Caco-2 (cell line): ENCODE measurements at regions of chr11 and their contacts with region 1.

Region 1: DNA sequence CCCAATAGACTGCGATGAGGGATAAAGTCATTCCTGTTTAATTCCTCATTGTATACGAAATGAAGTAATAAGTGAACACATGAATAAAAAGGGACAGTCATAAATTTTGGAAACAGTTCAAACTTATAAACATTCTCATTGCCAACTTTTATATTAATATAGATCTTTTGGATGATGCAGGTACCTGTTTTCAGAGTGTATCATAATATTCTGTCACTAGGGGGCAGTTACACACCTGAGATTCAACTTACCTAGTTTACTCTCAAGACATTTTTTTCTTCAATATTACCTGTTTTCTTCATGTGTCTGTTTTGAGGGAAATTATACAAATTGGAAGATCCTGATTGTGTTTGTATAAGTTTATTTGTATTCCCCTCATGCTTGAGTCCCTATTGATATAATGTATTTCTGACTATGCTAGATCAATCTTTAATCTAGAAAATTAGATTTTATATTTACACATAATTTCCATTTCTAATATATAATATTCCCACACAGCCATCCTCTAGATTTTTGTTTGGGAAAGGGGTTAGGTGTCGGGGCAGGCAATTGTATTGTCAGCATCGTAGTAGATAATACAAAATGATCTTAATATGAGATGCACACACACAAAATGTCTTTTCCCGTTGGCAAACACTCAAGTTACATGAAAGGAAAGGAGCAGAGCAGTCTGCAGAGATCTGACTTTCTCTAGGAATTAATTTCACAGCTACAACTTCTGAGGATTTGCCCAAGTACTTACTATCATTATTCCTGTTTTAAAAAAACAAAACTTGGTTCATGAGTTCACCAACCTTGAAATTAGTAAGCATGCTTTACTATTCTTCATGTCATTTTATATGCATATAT is 18.4 kb downstream of the FDX1 start:
- DNase-seq: no peak
- H3K4me3 ChIP-seq: no peak overlapping the region
- H3K4me3 Mint-ChIP-seq: no peak overlapping the region
- H3K27ac Mint-ChIP-seq: no peak overlapping the region
- H3K4me1 ChIP-seq: peaks cover 8% of the 10 kb centered on the region; the same call in 1 of the 2 replicates
- H3K4me1 Mint-ChIP-seq: peaks cover 16% of the 10 kb centered on the region
- H3K27me3 ChIP-seq: no peaks in the 10 kb centered on the region
- H3K27me3 Mint-ChIP-seq: no peaks in the 10 kb centered on the region
- CTCF ChIP-seq: peak; percentile 71 to 72

Region 2: GRCh38 chr11:110434952-110435779 is 13.0 kb before region 1 on chr11:
- CTCF ChIA-PET with region 1: interaction called, 15 read pairs
- POLR2A ChIA-PET with region 1: no interaction called
- intact Hi-C with region 1: no loop called
- DNase-seq: peak; percentile 58 to 64
- H3K4me3 ChIP-seq: no peak overlapping the region
- H3K4me3 Mint-ChIP-seq: no peak overlapping the region
- H3K27ac Mint-ChIP-seq: no peak overlapping the region
- H3K4me1 ChIP-seq: peaks cover 30% of the 10 kb centered on the region
- H3K4me1 Mint-ChIP-seq: peaks cover 33% of the 10 kb centered on the region
- H3K27me3 ChIP-seq: no peaks in the 10 kb centered on the region
- H3K27me3 Mint-ChIP-seq: no peaks in the 10 kb centered on the region
- CTCF ChIP-seq: peak; percentile 62 to 63

Region 3: DNA sequence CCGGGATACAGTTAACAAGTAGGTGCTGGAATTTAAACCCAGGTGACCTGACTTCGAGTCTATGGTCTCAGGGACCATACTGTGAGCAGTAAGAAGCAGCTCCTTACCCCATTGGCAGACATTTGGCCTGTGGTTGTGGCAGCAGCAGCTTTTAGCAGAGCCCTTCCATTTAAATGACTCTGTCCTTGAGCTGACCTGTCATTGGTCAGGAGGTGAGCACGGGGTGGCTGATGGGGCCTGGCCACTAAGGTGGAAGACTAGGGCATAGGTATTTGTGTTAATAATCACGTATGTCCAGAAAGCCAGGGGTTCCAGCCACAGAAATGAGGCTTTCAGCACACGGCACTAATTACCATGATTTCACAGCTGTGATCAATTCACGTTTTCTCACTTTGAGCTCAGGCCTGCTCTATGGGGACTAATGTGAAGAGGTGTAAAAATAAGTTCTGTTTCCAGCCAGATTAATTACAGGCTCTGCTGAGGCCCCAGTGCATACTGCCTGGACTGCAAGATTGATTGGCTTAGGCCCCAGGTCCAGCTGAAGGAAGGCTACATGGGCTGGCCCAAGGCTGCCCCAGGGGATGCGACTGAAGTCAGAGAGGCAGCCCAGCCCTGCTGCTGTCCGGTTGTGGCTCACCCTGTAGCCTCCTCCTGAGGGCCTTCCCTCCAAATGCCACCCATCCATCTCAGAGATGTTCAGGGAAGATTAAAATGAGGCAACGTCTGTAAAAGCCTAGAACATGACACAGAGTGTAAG is 57.6 kb after region 1 on chr11:
- CTCF ChIA-PET with region 1: no interaction called
- POLR2A ChIA-PET with region 1: no interaction called
- intact Hi-C with region 1: no loop called
- DNase-seq: no peak
- H3K4me3 ChIP-seq: no peak overlapping the region
- H3K4me3 Mint-ChIP-seq: no peak overlapping the region
- H3K27ac Mint-ChIP-seq: no peak overlapping the region
- H3K4me1 ChIP-seq: no peaks in the 10 kb centered on the region
- H3K4me1 Mint-ChIP-seq: no peaks in the 10 kb centered on the region
- H3K27me3 ChIP-seq: peaks cover 3% of the 10 kb centered on the region; the same call in 1 of the 2 replicates
- H3K27me3 Mint-ChIP-seq: peaks cover 10% of the 10 kb centered on the region
- CTCF ChIP-seq: no peak

Region 4: GRCh38 chr11:110582728-110583432 is 134.8 kb after region 1 on chr11:
- CTCF ChIA-PET with region 1: no interaction called
- POLR2A ChIA-PET with region 1: no interaction called
- intact Hi-C with region 1: loop called (anchors 5 kb)
- DNase-seq: peak in 1 of 2 experiments; percentile 45
- H3K4me3 ChIP-seq: no peak overlapping the region
- H3K4me3 Mint-ChIP-seq: no peak overlapping the region
- H3K27ac Mint-ChIP-seq: peak overlapping the region; percentile 30
- H3K4me1 ChIP-seq: peaks cover 21% of the 10 kb centered on the region
- H3K4me1 Mint-ChIP-seq: peaks cover 24% of the 10 kb centered on the region
- H3K27me3 ChIP-seq: no peaks in the 10 kb centered on the region
- H3K27me3 Mint-ChIP-seq: no peaks in the 10 kb centered on the region
- CTCF ChIP-seq: no peak

Region 5: DNA sequence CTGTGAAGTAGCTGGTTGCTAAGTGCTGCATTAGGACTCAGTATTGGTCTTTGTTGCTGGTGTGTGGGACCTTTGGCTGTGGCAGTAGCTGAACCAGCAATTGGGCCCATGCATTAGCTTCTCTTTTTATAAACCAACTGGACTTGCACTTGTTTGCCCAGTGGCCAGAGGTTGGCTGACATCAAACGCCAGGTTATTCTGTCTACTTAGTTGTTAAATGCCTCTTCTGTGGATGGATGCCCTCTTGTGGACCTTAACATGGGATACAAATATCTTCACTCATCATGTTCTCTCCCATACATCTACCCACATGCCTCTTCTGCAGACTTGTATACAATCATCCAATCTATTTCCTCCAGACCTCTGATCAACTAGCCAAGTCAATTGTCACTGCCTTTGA is 290.5 kb after region 1 on chr11:
- CTCF ChIA-PET with region 1: no interaction called
- POLR2A ChIA-PET with region 1: no interaction called
- intact Hi-C with region 1: loop called (anchors 1 kb)
- DNase-seq: peak in 1 of 2 experiments; percentile 14
- H3K4me3 ChIP-seq: no peak overlapping the region
- H3K4me3 Mint-ChIP-seq: no peak overlapping the region
- H3K27ac Mint-ChIP-seq: no peak overlapping the region
- H3K4me1 ChIP-seq: no peaks in the 10 kb centered on the region
- H3K4me1 Mint-ChIP-seq: no peaks in the 10 kb centered on the region
- H3K27me3 ChIP-seq: no peaks in the 10 kb centered on the region
- H3K27me3 Mint-ChIP-seq: peaks cover 14% of the 10 kb centered on the region
- CTCF ChIP-seq: peak in 1 of 2 experiments; percentile 14

Region 6: GRCh38 chr11:111046291-111046690 is 598.2 kb after region 1 on chr11:
- CTCF ChIA-PET with region 1: no interaction called
- POLR2A ChIA-PET with region 1: no interaction called
- intact Hi-C with region 1: no loop called
- DNase-seq: no peak
- H3K4me3 ChIP-seq: no peak overlapping the region
- H3K4me3 Mint-ChIP-seq: no peak overlapping the region
- H3K27ac Mint-ChIP-seq: no peak overlapping the region
- H3K4me1 ChIP-seq: no peaks in the 10 kb centered on the region
- H3K4me1 Mint-ChIP-seq: no peaks in the 10 kb centered on the region
- H3K27me3 ChIP-seq: peaks cover 2% of the 10 kb centered on the region; the same call in 1 of the 2 replicates
- H3K27me3 Mint-ChIP-seq: peaks cover 19% of the 10 kb centered on the region
- CTCF ChIP-seq: no peak

Region 7: DNA sequence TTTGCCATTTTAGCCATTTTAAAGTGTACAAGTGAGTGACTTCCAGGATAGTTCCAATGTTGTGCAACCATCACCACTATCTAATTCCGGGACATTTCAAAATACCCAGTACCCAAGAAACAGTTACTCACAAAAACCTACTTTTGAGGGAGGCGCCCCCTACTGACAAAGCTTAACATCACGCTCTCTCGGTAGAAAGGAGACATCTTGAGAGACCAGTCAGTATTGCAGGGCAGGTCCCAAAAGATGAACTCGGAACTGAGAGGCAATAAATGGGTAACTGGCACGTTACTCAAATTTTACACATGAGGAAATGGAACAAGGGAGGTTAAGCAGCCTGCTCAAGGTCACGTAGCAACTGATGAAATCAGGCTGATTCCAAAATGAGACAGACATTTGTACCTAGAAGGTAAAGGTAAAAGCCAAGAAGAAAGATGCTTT is 981.0 kb after region 1 on chr11:
- CTCF ChIA-PET with region 1: no interaction called
- POLR2A ChIA-PET with region 1: no interaction called
- intact Hi-C with region 1: loop called (anchors 5 kb)
- DNase-seq: peak; percentile 78 to 82
- H3K4me3 ChIP-seq: no peak overlapping the region
- H3K4me3 Mint-ChIP-seq: no peak overlapping the region
- H3K27ac Mint-ChIP-seq: no peak overlapping the region
- H3K4me1 ChIP-seq: no peaks in the 10 kb centered on the region
- H3K4me1 Mint-ChIP-seq: peaks cover 5% of the 10 kb centered on the region
- H3K27me3 ChIP-seq: no peaks in the 10 kb centered on the region
- H3K27me3 Mint-ChIP-seq: peaks cover 3% of the 10 kb centered on the region
- CTCF ChIP-seq: peak; percentile 80 to 85